Natural killer cell (primary cell): ENCODE measurements at regions of chr6 and their contacts with region 1.

Region 1: GRCh38 chr6:127302728-127303660 is 36.3 kb downstream of the RNF146 start:
- DNase-seq: peak in 1 of 2 donors; percentile 72
- ATAC-seq: peak; percentile 81 to 95 (median 82)
- H3K4me3 ChIP-seq: no peak overlapping the region
- H3K4me3 Mint-ChIP-seq: no peak overlapping the region
- H3K27ac ChIP-seq: no peak overlapping the region
- H3K27ac Mint-ChIP-seq: no peak overlapping the region
- H3K4me1 ChIP-seq: no peaks in the 10 kb centered on the region
- H3K4me1 Mint-ChIP-seq: peaks cover 29 to 31% of the 10 kb centered on the region in 2 donors
- H3K27me3 ChIP-seq: no peaks in the 10 kb centered on the region
- H3K27me3 Mint-ChIP-seq: no peaks in the 10 kb centered on the region
- CTCF ChIP-seq: peak; percentile 81

Region 2: GRCh38 chr6:127420556-127420955 is 117.6 kb after region 1 on chr6:
- intact Hi-C with region 1: loop called (anchors 2 kb)
- DNase-seq: peak; percentile 24 to 75
- ATAC-seq: peak; percentile 90 to 97 (median 96)
- H3K4me3 ChIP-seq: no peak overlapping the region
- H3K4me3 Mint-ChIP-seq: no peak overlapping the region
- H3K27ac ChIP-seq: no peak overlapping the region
- H3K27ac Mint-ChIP-seq: peak overlapping the region; percentile 7 to 75
- H3K4me1 ChIP-seq: no peaks in the 10 kb centered on the region
- H3K4me1 Mint-ChIP-seq: peaks cover 6 to 7% of the 10 kb centered on the region in 2 donors
- H3K27me3 ChIP-seq: no peaks in the 10 kb centered on the region
- H3K27me3 Mint-ChIP-seq: peaks cover 0 to 5% of the 10 kb centered on the region in 2 donors
- CTCF ChIP-seq: peak; percentile 22

Region 3: GRCh38 chr6:127547215-127547614 is 244.2 kb after region 1 on chr6:
- intact Hi-C with region 1: loop called (anchors 10 kb)
- DNase-seq: peak in 1 of 2 donors; percentile 41
- ATAC-seq: peak in 1 of 3 donors; percentile 27
- H3K4me3 ChIP-seq: no peak overlapping the region
- H3K4me3 Mint-ChIP-seq: no peak overlapping the region
- H3K27ac ChIP-seq: no peak overlapping the region
- H3K27ac Mint-ChIP-seq: no peak overlapping the region
- H3K4me1 ChIP-seq: no peaks in the 10 kb centered on the region
- H3K4me1 Mint-ChIP-seq: no peaks in the 10 kb centered on the region
- H3K27me3 ChIP-seq: peaks cover 2% of the 10 kb centered on the region
- H3K27me3 Mint-ChIP-seq: no peaks in the 10 kb centered on the region
- CTCF ChIP-seq: no peak